ENCODE measurements at regions of chr4 and their contacts with region 1.

Region 1: DNA sequence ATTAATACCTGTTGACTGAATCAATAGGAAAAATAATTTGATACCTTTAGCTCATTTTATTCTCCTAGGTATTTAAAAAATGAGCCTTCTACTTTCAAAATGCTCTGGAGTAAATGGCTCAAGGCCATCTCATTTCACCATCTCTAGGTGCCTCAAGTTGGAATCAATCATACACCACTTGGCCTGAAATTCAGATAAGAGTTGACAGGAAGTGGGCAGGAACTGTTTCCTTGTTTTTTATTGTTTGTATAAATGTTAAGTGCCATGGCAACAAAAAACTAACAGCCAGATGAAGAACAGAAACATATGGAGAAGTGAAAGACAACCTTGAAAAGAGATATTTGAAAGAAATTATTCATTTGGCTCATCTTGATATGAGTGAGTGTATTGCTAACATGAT is 12.4 kb downstream of the LIMCH1 start:
- DNase-seq: no peak

Region 2: GRCh38 chr4:40924096-40924792 is 626.1 kb before region 1 on chr4:
- intact Hi-C with region 1: no loop called
- DNase-seq: peak; percentile 90

Region 3: DNA sequence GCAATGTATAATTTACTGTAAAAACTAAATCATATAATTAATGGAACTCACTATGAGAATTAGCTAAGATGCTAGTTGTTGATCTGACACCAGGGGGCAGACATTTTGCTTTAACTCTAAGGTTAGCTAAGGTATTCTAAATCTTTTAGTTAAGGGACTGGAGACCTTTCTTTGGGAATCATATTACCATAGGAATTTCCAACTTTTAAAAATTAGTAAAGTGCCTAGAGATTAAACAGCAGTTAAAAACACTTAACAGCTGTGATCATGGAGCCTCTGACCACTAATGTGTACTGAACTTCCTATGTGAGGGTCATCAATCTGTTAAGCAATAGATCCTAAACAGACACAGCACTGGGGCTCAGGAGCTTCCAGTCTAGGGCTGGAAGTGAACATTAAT is 574.0 kb before region 1 on chr4:
- intact Hi-C with region 1: loop called in 1 of 2 experiments (anchors 10 kb)
- DNase-seq: no peak

Region 4: DNA sequence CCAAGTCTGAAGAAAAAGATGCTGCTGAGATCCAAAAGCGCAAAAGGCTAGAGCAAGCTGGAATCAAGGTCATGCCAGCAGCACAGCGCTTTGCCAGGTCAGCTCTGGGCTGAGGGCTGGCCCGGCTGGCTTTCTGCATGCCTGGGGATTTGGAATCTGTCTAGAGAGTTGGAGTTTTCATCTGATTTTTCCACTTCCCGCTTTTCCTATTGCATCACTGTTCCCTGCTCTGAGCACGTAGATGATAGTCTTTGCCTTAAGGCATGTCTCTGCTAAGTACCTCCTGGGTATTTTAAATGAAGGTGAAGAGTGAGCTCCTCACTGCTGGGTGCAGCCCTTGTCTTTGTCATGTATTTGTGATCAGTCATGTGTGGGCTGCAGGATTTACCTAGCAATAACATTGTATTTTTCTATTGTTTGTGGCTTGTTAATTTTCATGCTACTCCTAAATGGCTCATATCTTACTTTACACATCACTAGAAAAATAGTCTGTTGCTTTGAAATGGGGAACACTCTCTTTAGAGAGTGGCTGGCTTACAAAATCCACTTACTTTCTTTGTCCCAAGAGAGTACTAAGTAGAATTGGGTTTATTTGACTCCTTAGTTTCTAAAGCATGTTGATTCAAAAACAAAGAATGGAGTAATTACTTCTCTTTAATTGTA is 70.4 kb after region 1 on chr4:
- intact Hi-C with region 1: no loop called
- DNase-seq: no peak

Region 5: GRCh38 chr4:42460043-42460442 is 909.7 kb after region 1 on chr4:
- intact Hi-C with region 1: no loop called
- DNase-seq: no peak